ENCODE measurements at regions of chr5 and their contacts with region 1.

Region 1: DNA sequence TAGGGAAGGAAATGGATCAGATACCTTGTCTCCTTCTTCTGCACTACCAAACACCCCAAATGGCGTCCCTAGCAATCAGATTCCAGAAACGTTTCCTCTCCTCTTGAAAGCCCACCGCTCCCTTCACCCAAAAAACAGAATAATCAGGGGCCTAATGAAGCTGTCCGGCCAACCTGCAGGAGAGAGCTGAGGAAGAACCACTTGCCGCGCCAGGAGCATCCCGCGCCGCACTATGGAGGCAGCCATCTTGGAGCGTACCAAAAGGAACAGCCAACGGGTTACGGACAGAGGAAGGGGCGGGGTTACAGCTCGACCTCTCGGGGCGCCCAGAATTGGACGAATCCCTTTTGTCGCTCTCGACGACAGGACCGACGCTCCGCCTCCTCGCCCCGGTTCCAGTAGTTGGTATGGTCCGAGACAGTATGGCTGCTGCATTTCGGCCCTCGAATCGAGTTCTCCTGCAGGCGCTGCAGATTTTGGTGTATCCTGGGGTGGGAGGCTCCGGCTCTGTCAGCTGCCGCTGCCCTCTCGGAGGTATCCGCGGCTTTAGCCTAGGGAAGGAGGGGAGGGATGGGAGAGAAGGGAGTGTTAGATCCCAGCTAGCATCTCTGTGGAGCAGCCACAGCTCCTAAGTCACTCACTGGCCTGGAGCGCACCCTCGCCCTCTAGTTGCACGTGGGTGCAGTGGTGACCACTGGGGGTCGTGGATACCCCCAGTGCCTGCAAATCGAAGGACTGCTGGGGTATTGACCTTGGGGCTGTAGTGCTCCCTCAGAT is at the starts of genes MRPS27 and PTCD2:
- DNase-seq: peak; percentile 95
- ATAC-seq: peak; percentile 99
- H3K4me3 ChIP-seq: peak within 1 kb of the TSS; percentile 65 to 91 (median 90)
- H3K27ac ChIP-seq: peak within 1 kb of the TSS; percentile 76
- H3K4me1 ChIP-seq: peaks cover 37% of the 10 kb centered on the region
- H3K27me3 ChIP-seq: no peaks in the 10 kb centered on the region; a peak in 2 of 5 replicates
- CTCF ChIP-seq: peak; percentile 53
- EP300 ChIP-seq: 0 out of 4 replicates have a peak, but pooled peaks of 1 of the 2 experiments have one; percentile 18
- POLR2A ChIP-seq: peak; percentile 88 to 89
- RAD21 ChIP-seq: no peak
- total RNA-seq, gene MRPS27: 115 and 139 TPM in 2 replicates
- total RNA-seq, gene PTCD2: 6.4 and 7.0 TPM in 2 replicates

Region 2: DNA sequence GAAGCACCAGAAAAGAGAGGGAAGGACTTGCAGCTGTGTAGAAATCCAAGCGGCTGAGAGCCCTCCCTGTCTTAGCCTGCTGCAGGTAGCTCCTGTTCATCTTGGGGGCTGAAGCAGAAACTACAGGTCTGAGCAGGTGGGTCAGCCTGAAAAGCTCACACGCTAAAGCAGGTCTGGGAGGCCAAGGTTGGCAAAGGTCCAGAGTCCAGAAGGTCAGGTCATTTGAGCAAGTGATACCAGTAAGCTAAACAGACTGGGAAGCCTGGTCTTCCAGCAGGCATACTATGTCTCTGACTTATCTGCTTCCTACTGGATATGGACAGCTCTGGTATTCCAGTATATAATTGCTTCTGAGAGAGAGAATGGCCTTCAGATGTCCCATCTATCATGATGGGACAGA is 26.2 kb after region 1 on chr5:
- CTCF ChIA-PET with region 1: no interaction called
- POLR2A ChIA-PET with region 1: interaction called, 10 read pairs
- in situ Hi-C with region 1: no loop called
- intact Hi-C with region 1: no loop called
- DNase-seq: peak; percentile 58
- ATAC-seq: peak; percentile 83
- H3K4me3 ChIP-seq: no peak overlapping the region
- H3K27ac ChIP-seq: no peak overlapping the region
- H3K4me1 ChIP-seq: peaks cover 13% of the 10 kb centered on the region
- H3K27me3 ChIP-seq: no peaks in the 10 kb centered on the region; a peak in 1 of 5 replicates
- CTCF ChIP-seq: no peak
- EP300 ChIP-seq: no peak
- POLR2A ChIP-seq: no peak
- RAD21 ChIP-seq: no peak

Region 3: DNA sequence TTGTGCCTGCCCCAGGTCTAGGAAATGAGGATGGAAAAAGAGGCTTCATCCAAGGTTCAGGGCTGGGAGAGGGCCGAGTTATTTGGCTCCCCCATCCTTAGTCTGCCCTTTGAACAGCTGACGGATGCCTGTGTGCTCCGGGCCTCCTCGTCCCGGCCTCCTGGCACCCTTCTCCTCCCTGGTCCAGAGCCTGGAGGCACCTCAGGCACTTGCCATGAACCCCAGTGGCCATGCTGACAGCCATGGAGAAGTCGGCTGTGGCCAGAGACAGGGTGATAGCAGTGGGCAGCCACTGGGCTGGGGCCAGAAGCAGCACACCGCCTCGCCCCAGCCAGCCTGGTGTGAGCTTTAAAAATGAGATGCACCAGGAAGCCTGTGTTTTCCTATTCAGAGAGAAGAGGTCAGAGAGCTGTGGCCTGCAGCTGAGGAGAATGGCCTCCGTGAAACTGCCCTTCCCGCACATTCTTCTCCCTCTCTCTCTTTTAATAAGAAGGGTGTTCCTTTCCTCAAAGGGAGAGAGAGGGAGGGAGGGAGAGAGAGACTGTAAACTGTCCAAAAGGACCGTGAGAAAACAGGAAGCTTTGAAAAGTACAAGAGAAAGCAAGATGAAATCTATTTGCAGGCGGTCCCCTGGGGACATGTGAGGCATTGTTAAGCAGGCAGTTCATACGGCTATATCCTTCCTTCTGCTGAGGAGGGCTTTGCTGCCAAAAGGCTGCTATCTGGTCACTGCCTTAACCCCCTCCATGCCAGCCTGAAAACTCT is 131.8 kb after region 1 on chr5:
- CTCF ChIA-PET with region 1: no interaction called
- POLR2A ChIA-PET with region 1: no interaction called
- in situ Hi-C with region 1: no loop called
- intact Hi-C with region 1: no loop called
- DNase-seq: no peak
- ATAC-seq: no peak
- H3K4me3 ChIP-seq: no peak overlapping the region
- H3K27ac ChIP-seq: no peak overlapping the region
- H3K4me1 ChIP-seq: no peaks in the 10 kb centered on the region
- H3K27me3 ChIP-seq: peaks cover 2 to 21% of the 10 kb centered on the region in 2 experiments; a peak in 4 of 5 replicates
- CTCF ChIP-seq: no peak
- EP300 ChIP-seq: no peak
- POLR2A ChIP-seq: no peak
- RAD21 ChIP-seq: no peak

Measured in HepG2 (cell line).